ENCODE measurements at regions of chr1 and their contacts with region 1.

Region 1: GRCh38 chr1:206923009-206923960 is 1.5 kb upstream of the FCMR start:
- DNase-seq: peak; percentile 44
- H3K4me3 ChIP-seq: no peak overlapping the region
- H3K27ac ChIP-seq: peak overlapping the region; percentile 35 to 73 (median 60)
- H3K4me1 ChIP-seq: peaks cover 0 to 9% (median 6%) of the 10 kb centered on the region in 3 donors
- H3K27me3 ChIP-seq: no peaks in the 10 kb centered on the region
- CTCF ChIP-seq: no peak
- POLR2A ChIP-seq: peak in 1 of 4 donors; percentile 71

Region 2: DNA sequence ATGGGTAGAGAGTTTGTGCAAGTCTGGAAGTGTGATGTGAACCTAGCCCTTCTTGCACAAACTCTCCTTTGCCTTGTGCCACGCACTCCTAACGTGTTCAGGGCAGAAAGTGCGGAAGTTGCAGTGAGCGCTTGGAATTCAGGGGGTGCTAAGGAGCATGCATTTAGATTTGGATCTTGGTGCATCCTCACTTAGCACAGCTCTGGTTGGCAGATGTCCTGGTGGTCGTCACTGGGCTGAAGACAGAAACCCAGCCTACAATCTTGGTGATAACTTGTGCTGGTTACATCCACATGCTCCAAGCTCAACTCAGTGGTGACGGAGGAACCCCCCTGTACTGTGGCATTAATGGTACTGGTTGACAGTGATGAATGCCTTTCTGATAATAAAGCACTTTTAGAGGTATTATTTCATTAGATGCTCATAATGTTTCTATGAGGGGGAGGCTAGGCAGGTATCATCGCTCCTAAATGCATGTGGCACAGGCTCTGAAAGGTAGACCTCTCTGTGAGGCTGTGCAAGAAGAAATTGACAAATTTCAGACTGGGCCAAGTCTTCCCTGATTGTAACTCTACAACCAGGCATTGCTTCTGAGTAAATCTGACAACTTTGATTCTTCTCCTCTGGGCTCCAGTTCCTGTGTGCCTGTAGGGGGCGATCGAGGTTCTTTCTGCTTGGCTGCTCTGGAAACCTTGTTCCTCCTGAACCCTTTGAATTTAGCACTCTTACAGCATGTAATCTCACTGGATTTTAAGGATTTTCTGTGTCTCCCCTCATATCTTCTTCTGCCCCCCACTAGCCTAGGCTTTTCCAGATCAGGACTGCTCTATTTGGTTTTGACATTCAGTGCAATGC is 197.9 kb before region 1 on chr1:
- intact Hi-C with region 1: no loop called
- DNase-seq: no peak
- H3K4me3 ChIP-seq: no peak overlapping the region
- H3K27ac ChIP-seq: no peak overlapping the region
- H3K4me1 ChIP-seq: peaks cover 8 to 74% (median 30%) of the 10 kb centered on the region in 3 donors
- H3K27me3 ChIP-seq: no peaks in the 10 kb centered on the region
- CTCF ChIP-seq: peak in 5 of 6 experiments; percentile 32 to 67 (median 57)
- POLR2A ChIP-seq: no peak

Region 3: GRCh38 chr1:206979379-206980043 is 56.2 kb after region 1 on chr1:
- intact Hi-C with region 1: loop called (anchors 5 kb)
- DNase-seq: no peak
- H3K4me3 ChIP-seq: no peak overlapping the region
- H3K27ac ChIP-seq: no peak overlapping the region
- H3K4me1 ChIP-seq: peaks cover 0 to 9% (median 0%) of the 10 kb centered on the region in 3 donors
- H3K27me3 ChIP-seq: peaks cover 0 to 8% (median 0%) of the 10 kb centered on the region in 4 donors
- CTCF ChIP-seq: peak in 5 of 6 experiments; percentile 22 to 70 (median 62)
- POLR2A ChIP-seq: no peak